ENCODE measurements at regions of chr10 and their contacts with region 1.

Region 1: GRCh38 chr10:101018600-101019439 is 12.1 kb downstream of the PDZD7 start:
- DNase-seq: peak; percentile 72
- ATAC-seq: peak; percentile 91
- H3K4me3 ChIP-seq: peak overlapping the region; percentile 13 to 38; a peak in 3 of 4 replicates
- H3K27ac ChIP-seq: no peak overlapping the region
- H3K4me1 ChIP-seq: peaks cover 7 to 30% of the 10 kb centered on the region in 2 experiments; a peak in 3 of 4 replicates
- H3K27me3 ChIP-seq: no peaks in the 10 kb centered on the region
- CTCF ChIP-seq: peak in 2 of 3 experiments; percentile 92 to 94; a peak in 4 of 6 replicates
- POLR2A ChIP-seq: no peak
- RAD21 ChIP-seq: no peak

Region 2: DNA sequence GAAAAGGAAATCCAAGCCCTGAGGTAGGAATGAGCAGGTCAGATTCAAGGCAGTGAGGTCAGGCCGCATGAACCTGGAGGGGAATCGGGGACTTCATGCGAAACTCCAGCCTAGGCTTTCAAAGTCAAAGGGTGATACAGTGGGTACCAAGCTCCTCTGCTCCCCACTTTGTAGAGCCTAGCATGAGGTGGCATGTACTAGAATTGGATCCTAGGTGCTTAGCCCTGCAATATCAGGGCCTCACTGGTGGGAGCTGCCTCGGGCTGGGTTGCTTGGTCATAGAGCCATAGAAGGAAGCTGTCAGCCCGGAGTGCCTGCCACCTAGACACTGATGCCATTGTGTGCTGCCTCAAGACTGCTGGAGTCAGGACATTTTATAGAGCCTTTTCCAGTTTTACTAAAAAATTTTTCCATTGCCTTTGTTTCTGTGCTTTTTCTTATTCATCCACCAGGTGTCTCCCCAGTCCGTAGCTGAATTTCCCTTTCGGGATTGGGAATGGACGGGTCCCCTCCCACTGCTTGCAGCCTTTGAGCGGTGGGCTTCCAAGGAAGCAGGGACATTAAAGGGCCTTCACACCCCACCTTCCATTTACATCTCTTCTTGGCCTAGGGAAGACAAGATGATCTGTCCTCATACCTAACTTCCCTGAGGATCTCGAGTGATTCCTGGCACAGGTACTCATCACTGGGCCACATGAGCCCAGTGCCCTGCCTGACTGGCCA is 24.7 kb before region 1 on chr10:
- CTCF ChIA-PET with region 1: interaction called, 98 read pairs
- POLR2A ChIA-PET with region 1: interaction called, 9 read pairs
- RAD21 ChIA-PET with region 1: interaction called, 4 to 10 read pairs
- intact Hi-C with region 1: no loop called
- DNase-seq: no peak
- ATAC-seq: no peak
- H3K4me3 ChIP-seq: no peak overlapping the region
- H3K27ac ChIP-seq: peak overlapping the region; percentile 87
- H3K4me1 ChIP-seq: peaks cover 10 to 51% of the 10 kb centered on the region in 2 experiments
- H3K27me3 ChIP-seq: no peaks in the 10 kb centered on the region
- CTCF ChIP-seq: peak in 2 of 3 experiments; percentile 75 to 90; a peak in 4 of 6 replicates
- POLR2A ChIP-seq: no peak
- RAD21 ChIP-seq: no peak

Region 3: DNA sequence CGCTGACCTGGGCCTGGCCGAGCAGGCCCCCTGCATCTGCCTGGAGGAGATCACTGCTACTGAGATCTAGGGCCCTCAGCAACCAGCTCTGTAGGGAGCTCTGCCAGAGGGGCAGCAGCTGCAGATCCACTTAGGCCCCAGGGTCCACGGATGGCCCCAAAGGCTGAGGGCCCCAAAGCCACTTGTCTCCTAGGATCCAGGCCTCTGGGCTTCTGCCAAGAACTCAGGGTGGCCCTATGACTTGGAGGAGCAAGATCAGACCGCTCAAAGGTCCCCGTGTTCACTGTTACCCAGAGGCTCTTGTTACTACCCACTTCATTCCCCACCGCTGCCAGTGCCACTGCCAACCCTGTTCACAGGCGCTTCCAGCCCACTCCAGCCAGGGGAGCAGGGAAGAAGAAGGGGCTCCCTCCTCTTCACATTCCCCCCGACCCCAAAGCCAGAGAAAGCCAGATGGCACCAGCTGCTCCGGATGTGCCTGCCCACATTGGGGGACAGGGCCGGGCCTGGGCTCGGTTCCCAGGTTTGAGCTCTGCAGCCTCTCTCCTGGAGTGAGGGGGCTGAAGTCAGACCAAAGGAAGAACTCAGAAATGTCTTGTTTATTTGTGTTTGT is 11.6 kb before region 1 on chr10:
- CTCF ChIA-PET with region 1: interaction called, 14 read pairs
- POLR2A ChIA-PET with region 1: no interaction called
- RAD21 ChIA-PET with region 1: no interaction called
- intact Hi-C with region 1: no loop called
- DNase-seq: no peak
- ATAC-seq: no peak
- H3K4me3 ChIP-seq: no peak overlapping the region
- H3K27ac ChIP-seq: no peak overlapping the region; the same call in 1 of the 2 replicates
- H3K4me1 ChIP-seq: peaks cover 13 to 36% of the 10 kb centered on the region in 2 experiments
- H3K27me3 ChIP-seq: no peaks in the 10 kb centered on the region
- CTCF ChIP-seq: no peak
- POLR2A ChIP-seq: no peak
- RAD21 ChIP-seq: no peak

Region 4: DNA sequence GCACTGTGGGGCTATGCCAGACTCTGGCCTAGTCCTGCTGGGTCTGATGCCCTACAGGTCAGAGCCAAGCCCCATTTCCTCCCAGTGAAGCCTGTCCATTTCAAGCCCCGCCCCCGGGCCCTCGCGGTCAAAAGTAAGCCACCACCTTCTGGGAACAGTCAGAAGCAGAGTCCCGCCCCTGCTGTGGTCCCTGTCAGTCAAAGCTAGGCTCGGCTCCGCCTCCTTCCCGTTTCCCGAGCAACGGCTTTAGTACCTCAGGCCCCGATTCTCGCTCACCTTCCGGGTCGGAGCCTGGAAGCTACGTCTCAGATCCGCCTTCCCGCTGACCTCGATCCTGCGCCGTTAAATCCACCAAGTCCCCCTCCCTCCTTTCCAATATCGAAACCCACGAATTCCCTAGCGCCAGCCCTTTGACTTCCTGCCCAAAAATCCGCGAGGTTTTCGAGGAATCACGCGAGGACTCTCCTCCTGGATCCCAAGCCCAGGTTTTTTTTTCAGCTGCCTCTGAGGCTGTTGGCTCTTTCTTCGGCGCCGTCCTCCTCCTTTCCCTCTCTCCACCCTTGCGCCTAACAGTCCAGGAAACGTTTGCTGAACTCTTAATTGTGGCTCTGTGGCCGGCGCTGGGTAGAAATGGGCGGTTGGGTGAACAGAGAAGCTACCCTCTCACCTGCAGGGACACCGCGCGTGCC is 24.0 kb after region 1 on chr10:
- CTCF ChIA-PET with region 1: interaction called, 19 read pairs
- POLR2A ChIA-PET with region 1: no interaction called
- RAD21 ChIA-PET with region 1: interaction called, 3 to 9 read pairs
- intact Hi-C with region 1: no loop called
- DNase-seq: peak; percentile 97
- ATAC-seq: peak; percentile 91
- H3K4me3 ChIP-seq: peak overlapping the region; percentile 55 to 59
- H3K27ac ChIP-seq: peak overlapping the region; percentile 84
- H3K4me1 ChIP-seq: peaks cover 26 to 33% of the 10 kb centered on the region in 2 experiments
- H3K27me3 ChIP-seq: no peaks in the 10 kb centered on the region
- CTCF ChIP-seq: no peak
- POLR2A ChIP-seq: peak; percentile 82
- RAD21 ChIP-seq: no peak

Region 5: GRCh38 chr10:101060036-101060950 is 41.5 kb after region 1 on chr10:
- CTCF ChIA-PET with region 1: interaction called, 10 read pairs
- POLR2A ChIA-PET with region 1: no interaction called
- RAD21 ChIA-PET with region 1: no interaction called
- intact Hi-C with region 1: no loop called
- DNase-seq: peak; percentile 98
- ATAC-seq: peak; percentile 67
- H3K4me3 ChIP-seq: peak overlapping the region; percentile 80 to 84
- H3K27ac ChIP-seq: peak overlapping the region; percentile 99
- H3K4me1 ChIP-seq: peaks cover 42 to 51% of the 10 kb centered on the region in 2 experiments
- H3K27me3 ChIP-seq: no peaks in the 10 kb centered on the region
- CTCF ChIP-seq: peak in 2 of 3 experiments; percentile 98 to 99; a peak in 4 of 6 replicates
- POLR2A ChIP-seq: peak; percentile 37
- RAD21 ChIP-seq: no peak

Region 6: GRCh38 chr10:101176577-101176976 is 157.8 kb after region 1 on chr10:
- CTCF ChIA-PET with region 1: no interaction called
- POLR2A ChIA-PET with region 1: no interaction called
- RAD21 ChIA-PET with region 1: no interaction called
- intact Hi-C with region 1: no loop called
- DNase-seq: no peak
- ATAC-seq: no peak
- H3K4me3 ChIP-seq: no peak overlapping the region
- H3K27ac ChIP-seq: no peak overlapping the region
- H3K4me1 ChIP-seq: no peaks in the 10 kb centered on the region
- H3K27me3 ChIP-seq: no peaks in the 10 kb centered on the region
- CTCF ChIP-seq: no peak
- POLR2A ChIP-seq: no peak
- RAD21 ChIP-seq: no peak